ENCODE measurements at regions of chrX and their contacts with region 1.

Region 1: GRCh38 chrX:109714340-109714958 is 18.6 kb downstream of the ACSL4 start:
- DNase-seq: no peak
- ATAC-seq: no peak
- H3K4me3 ChIP-seq: no peak overlapping the region
- H3K27ac ChIP-seq: no peak overlapping the region
- H3K4me1 ChIP-seq: peaks cover 1% of the 10 kb centered on the region
- H3K27me3 ChIP-seq: no peaks in the 10 kb centered on the region

Region 2: GRCh38 chrX:109403927-109404326 is 310.5 kb before region 1 on chrX:
- intact Hi-C with region 1: no loop called
- DNase-seq: no peak
- ATAC-seq: no peak
- H3K4me3 ChIP-seq: no peak overlapping the region
- H3K27ac ChIP-seq: no peak overlapping the region
- H3K4me1 ChIP-seq: no peaks in the 10 kb centered on the region
- H3K27me3 ChIP-seq: no peaks in the 10 kb centered on the region

Region 3: DNA sequence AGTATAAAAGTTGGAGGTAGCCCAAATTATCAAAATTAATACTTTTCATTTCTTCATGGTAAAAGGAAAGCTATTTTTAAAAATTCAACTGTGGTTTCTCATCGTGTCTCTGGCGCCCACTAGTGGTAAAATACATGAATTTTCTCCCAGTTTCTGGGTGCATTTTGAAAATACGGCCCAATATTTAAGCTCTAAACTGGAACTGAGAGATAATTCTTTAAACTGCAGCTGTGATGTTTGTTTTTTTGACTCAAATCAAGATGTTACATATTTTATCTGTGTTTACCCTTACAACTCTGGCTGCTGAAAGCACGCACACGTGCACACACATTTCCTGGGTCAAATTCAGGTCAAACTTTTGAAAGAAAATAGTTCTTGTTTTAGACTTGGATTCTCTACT is 142.5 kb after region 1 on chrX:
- intact Hi-C with region 1: loop called in 1 of 4 experiments (anchors 10 kb)
- DNase-seq: no peak
- ATAC-seq: no peak
- H3K4me3 ChIP-seq: no peak overlapping the region
- H3K27ac ChIP-seq: no peak overlapping the region
- H3K4me1 ChIP-seq: no peaks in the 10 kb centered on the region
- H3K27me3 ChIP-seq: no peaks in the 10 kb centered on the region

Region 4: GRCh38 chrX:109890895-109891502 is 176.6 kb after region 1 on chrX:
- intact Hi-C with region 1: loop called in 1 of 4 experiments (anchors 5 kb)
- DNase-seq: peak; percentile 43 to 71 (median 68)
- ATAC-seq: peak; percentile 71 to 80
- H3K4me3 ChIP-seq: no peak overlapping the region
- H3K27ac ChIP-seq: no peak overlapping the region
- H3K4me1 ChIP-seq: no peaks in the 10 kb centered on the region
- H3K27me3 ChIP-seq: no peaks in the 10 kb centered on the region